Sigmoid colon (tissue), 7 donors: ENCODE measurements at regions of chrX and their contacts with region 1.

Region 1: DNA sequence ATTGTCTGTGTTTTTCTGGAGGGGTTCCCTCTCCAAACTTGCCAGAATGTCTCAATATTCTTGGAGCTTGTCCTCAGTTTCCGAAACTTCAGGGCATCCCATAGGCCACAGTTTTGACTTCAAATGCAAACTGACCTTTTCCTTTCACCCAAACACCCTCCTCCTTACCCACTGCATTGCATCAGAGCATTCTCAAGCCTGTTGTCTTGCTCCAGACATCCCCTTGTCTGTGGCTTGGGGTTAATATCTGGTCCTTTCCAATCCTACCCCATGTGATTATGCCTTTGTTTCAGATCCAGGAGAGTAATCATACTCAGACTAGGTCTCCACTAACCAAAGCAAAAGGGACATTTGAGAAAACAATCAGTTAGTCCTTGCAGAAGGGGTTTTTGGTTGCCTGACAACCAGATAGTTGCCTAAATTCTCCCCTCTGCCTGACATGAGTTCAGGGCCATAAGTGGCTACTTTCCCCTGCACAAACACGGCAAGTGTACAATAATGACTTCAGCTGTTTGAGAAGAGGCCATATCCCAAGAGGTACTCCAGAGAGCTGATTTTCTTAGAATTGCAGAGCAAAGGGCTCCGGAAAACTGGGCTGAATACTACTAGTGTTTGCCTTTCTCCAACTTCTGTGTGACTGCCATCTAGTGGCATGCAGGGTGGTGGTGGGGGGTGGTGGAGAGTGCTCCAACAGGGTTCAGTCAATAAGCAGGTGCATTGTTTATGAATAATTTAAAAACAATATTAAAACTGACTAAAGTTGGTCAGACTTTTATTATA is 130.2 kb downstream of the CHRDL1 start:
- DNase-seq: no peak
- H3K4me3 ChIP-seq: no peak overlapping the region
- H3K27ac ChIP-seq: no peak overlapping the region
- H3K4me1 ChIP-seq: no peaks in the 10 kb centered on the region
- H3K27me3 ChIP-seq: no peaks in the 10 kb centered on the region
- CTCF ChIP-seq: no peak
- EP300 ChIP-seq: no peak
- POLR2A ChIP-seq: no peak

Region 2: GRCh38 chrX:109774706-109775105 is 890.7 kb before region 1 on chrX:
- intact Hi-C with region 1: no loop called
- DNase-seq: no peak
- H3K4me3 ChIP-seq: no peak overlapping the region
- H3K27ac ChIP-seq: no peak overlapping the region
- H3K4me1 ChIP-seq: no peaks in the 10 kb centered on the region
- H3K27me3 ChIP-seq: no peaks in the 10 kb centered on the region
- CTCF ChIP-seq: no peak
- EP300 ChIP-seq: no peak
- POLR2A ChIP-seq: no peak

Region 3: GRCh38 chrX:110444996-110445395 is 220.4 kb before region 1 on chrX:
- intact Hi-C with region 1: loop called (anchors 5 kb)
- DNase-seq: no peak
- H3K4me3 ChIP-seq: no peak overlapping the region
- H3K27ac ChIP-seq: no peak overlapping the region
- H3K4me1 ChIP-seq: no peaks in the 10 kb centered on the region
- H3K27me3 ChIP-seq: no peaks in the 10 kb centered on the region
- CTCF ChIP-seq: no peak
- EP300 ChIP-seq: no peak
- POLR2A ChIP-seq: no peak